ENCODE measurements at regions of chr15 and their contacts with region 1.

Region 1: GRCh38 chr15:63048115-63048775 is 5.7 kb downstream of the TPM1 start:
- DNase-seq: peak; percentile 59 to 94
- H3K4me3 ChIP-seq: peak overlapping the region; percentile 76 to 85
- H3K27ac ChIP-seq: peak overlapping the region; percentile 86 to 98
- H3K4me1 ChIP-seq: peaks cover 12 to 50% of the 10 kb centered on the region in 2 donors
- H3K27me3 ChIP-seq: no peaks in the 10 kb centered on the region
- CTCF ChIP-seq: peak; percentile 87 to 97 (median 90)

Region 2: GRCh38 chr15:62782039-62782791 is 266.0 kb before region 1 on chr15:
- intact Hi-C with region 1: loop called (anchors 5 kb)
- DNase-seq: peak; percentile 30 to 91
- H3K4me3 ChIP-seq: no peak overlapping the region
- H3K27ac ChIP-seq: peak overlapping the region; percentile 32 to 34
- H3K4me1 ChIP-seq: peaks cover 0 to 9% of the 10 kb centered on the region in 2 donors
- H3K27me3 ChIP-seq: no peaks in the 10 kb centered on the region
- CTCF ChIP-seq: peak; percentile 69 to 71 (median 69)

Region 3: GRCh38 chr15:63093486-63094205 is 45.4 kb after region 1 on chr15:
- intact Hi-C with region 1: loop called (anchors 1 kb)
- DNase-seq: peak; percentile 16 to 88
- H3K4me3 ChIP-seq: no peak overlapping the region
- H3K27ac ChIP-seq: no peak overlapping the region
- H3K4me1 ChIP-seq: peaks cover 0 to 5% of the 10 kb centered on the region in 2 donors
- H3K27me3 ChIP-seq: no peaks in the 10 kb centered on the region
- CTCF ChIP-seq: peak; percentile 83 to 89 (median 86)

Region 4: GRCh38 chr15:63277038-63277892 is 229.0 kb after region 1 on chr15 and contains the start of gene APH1B:
- intact Hi-C with region 1: loop called (anchors 5 kb)
- DNase-seq: peak in 1 of 2 donors; percentile 85
- H3K4me3 ChIP-seq: peak within 1 kb of the TSS; percentile 76 to 81
- H3K27ac ChIP-seq: peak within 1 kb of the TSS; percentile 84 to 87
- H3K4me1 ChIP-seq: peaks cover 0 to 4% of the 10 kb centered on the region in 2 donors
- H3K27me3 ChIP-seq: no peaks in the 10 kb centered on the region
- CTCF ChIP-seq: no peak
- total RNA-seq, gene APH1B: 17.0 TPM

Measured in ascending aorta (tissue), 2 donors.